Mammary epithelial cell (primary cell): ENCODE measurements at regions of chr2 and their contacts with region 1.

Region 1: GRCh38 chr2:240452457-240453256 is 17.2 kb downstream of the GPC1 start:
- DNase-seq: peak; percentile 39
- H3K4me3 ChIP-seq: peak overlapping the region; percentile 14 to 62 (median 50)
- H3K27ac ChIP-seq: no peak overlapping the region
- H3K4me1 ChIP-seq: peaks cover 76% of the 10 kb centered on the region
- H3K27me3 ChIP-seq: no peaks in the 10 kb centered on the region
- CTCF ChIP-seq: no peak

Region 2: DNA sequence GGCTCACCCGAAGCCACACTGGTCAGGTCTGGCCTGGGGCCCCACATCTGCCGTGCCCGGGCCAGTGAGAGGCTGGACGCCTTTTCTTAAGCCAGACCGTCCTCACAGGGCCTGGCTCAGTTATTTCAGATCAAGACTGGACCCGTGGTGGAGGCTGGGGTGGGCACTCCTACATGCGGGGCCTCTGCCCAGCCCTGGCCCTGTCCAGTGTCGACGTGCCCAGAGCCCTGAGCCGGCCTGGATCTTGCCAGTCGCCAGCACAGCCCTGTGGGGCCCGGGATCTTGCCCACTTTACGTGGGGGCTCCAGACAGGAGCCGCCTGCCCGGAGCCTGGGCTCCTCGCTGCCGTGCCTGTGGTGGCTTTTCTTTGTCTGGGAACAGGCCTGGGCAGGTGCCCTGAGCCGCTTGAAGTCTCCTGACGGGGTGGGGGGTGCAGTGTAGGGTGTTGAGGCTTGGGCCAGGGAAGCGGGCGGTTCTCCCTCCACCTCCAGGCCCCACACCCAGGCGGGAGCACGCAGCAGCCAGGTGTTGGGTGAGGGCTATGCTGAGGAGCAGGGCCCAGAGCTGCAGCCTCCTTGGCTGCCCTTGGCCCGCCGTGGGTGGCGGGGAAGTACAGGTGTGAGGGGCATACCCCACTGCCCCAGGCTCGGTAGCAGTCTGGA is 11.2 kb before region 1 on chr2:
- CTCF ChIA-PET with region 1: no interaction called
- dilution Hi-C with region 1: no loop called
- in situ Hi-C with region 1: no loop called
- intact Hi-C with region 1: loop called (anchors 1 kb)
- DNase-seq: peak; percentile 72
- H3K4me3 ChIP-seq: peak overlapping the region in 1 of 3 experiments; percentile 8
- H3K27ac ChIP-seq: peak overlapping the region; percentile 28
- H3K4me1 ChIP-seq: peaks cover 67% of the 10 kb centered on the region
- H3K27me3 ChIP-seq: no peaks in the 10 kb centered on the region
- CTCF ChIP-seq: no peak

Region 3: GRCh38 chr2:240519396-240520129 is 66.9 kb after region 1 on chr2:
- CTCF ChIA-PET with region 1: no interaction called
- dilution Hi-C with region 1: loop called (anchors 5 kb)
- in situ Hi-C with region 1: no loop called
- intact Hi-C with region 1: no loop called
- DNase-seq: no peak
- H3K4me3 ChIP-seq: no peak overlapping the region
- H3K27ac ChIP-seq: no peak overlapping the region
- H3K4me1 ChIP-seq: peaks cover 5% of the 10 kb centered on the region
- H3K27me3 ChIP-seq: no peaks in the 10 kb centered on the region
- CTCF ChIP-seq: no peak

Region 4: GRCh38 chr2:240566203-240567136 is 113.8 kb after region 1 on chr2:
- CTCF ChIA-PET with region 1: no interaction called
- dilution Hi-C with region 1: no loop called
- in situ Hi-C with region 1: no loop called
- intact Hi-C with region 1: loop called (anchors 5 kb)
- DNase-seq: peak; percentile 73
- H3K4me3 ChIP-seq: peak overlapping the region in 2 of 3 experiments; percentile 65 to 67
- H3K27ac ChIP-seq: peak overlapping the region; percentile 61
- H3K4me1 ChIP-seq: peaks cover 46% of the 10 kb centered on the region
- H3K27me3 ChIP-seq: no peaks in the 10 kb centered on the region
- CTCF ChIP-seq: peak; percentile 68 to 73